Naive thymus-derived CD4-positive, alpha-beta T cell (primary cell): ENCODE measurements at regions of chr14 and their contacts with region 1.

Region 1: GRCh38 chr14:106185837-106186233 is 659.5 kb downstream of the TMEM121 start:
- DNase-seq: peak; percentile 55 to 80 (median 74)
- ATAC-seq: peak; percentile 89
- H3K4me3 ChIP-seq: no peak overlapping the region
- H3K4me3 Mint-ChIP-seq: peak overlapping the region; percentile 54 to 81 (median 72)
- H3K27ac ChIP-seq: peak overlapping the region; percentile 46
- H3K27ac Mint-ChIP-seq: peak overlapping the region; percentile 59 to 96 (median 89)
- H3K4me1 ChIP-seq: peaks cover 21 to 27% of the 10 kb centered on the region in 2 donors
- H3K4me1 Mint-ChIP-seq: peaks cover 24 to 51% (median 45%) of the 10 kb centered on the region in 7 donors
- H3K27me3 ChIP-seq: no peaks in the 10 kb centered on the region
- H3K27me3 Mint-ChIP-seq: peaks cover 0 to 64% (median 0%) of the 10 kb centered on the region in 5 donors

Region 2: GRCh38 chr14:105622322-105622955 is 563.4 kb before region 1 on chr14:
- CTCF ChIA-PET with region 1: no interaction called
- POLR2A ChIA-PET with region 1: no interaction called
- intact Hi-C with region 1: no loop called
- DNase-seq: no peak
- ATAC-seq: no peak
- H3K4me3 ChIP-seq: no peak overlapping the region
- H3K4me3 Mint-ChIP-seq: no peak overlapping the region
- H3K27ac ChIP-seq: no peak overlapping the region
- H3K27ac Mint-ChIP-seq: no peak overlapping the region
- H3K4me1 ChIP-seq: no peaks in the 10 kb centered on the region
- H3K4me1 Mint-ChIP-seq: no peaks in the 10 kb centered on the region
- H3K27me3 ChIP-seq: no peaks in the 10 kb centered on the region
- H3K27me3 Mint-ChIP-seq: peaks cover 0 to 5% (median 0%) of the 10 kb centered on the region in 5 donors

Region 3: GRCh38 chr14:105760691-105761346 is 425.0 kb before region 1 on chr14:
- CTCF ChIA-PET with region 1: no interaction called
- POLR2A ChIA-PET with region 1: no interaction called
- intact Hi-C with region 1: no loop called
- DNase-seq: peak in 1 of 9 donors; percentile 5
- ATAC-seq: no peak
- H3K4me3 ChIP-seq: no peak overlapping the region
- H3K4me3 Mint-ChIP-seq: no peak overlapping the region
- H3K27ac ChIP-seq: no peak overlapping the region
- H3K27ac Mint-ChIP-seq: no peak overlapping the region
- H3K4me1 ChIP-seq: no peaks in the 10 kb centered on the region
- H3K4me1 Mint-ChIP-seq: no peaks in the 10 kb centered on the region
- H3K27me3 ChIP-seq: no peaks in the 10 kb centered on the region
- H3K27me3 Mint-ChIP-seq: peaks cover 0 to 11% (median 4%) of the 10 kb centered on the region in 5 donors

Region 4: DNA sequence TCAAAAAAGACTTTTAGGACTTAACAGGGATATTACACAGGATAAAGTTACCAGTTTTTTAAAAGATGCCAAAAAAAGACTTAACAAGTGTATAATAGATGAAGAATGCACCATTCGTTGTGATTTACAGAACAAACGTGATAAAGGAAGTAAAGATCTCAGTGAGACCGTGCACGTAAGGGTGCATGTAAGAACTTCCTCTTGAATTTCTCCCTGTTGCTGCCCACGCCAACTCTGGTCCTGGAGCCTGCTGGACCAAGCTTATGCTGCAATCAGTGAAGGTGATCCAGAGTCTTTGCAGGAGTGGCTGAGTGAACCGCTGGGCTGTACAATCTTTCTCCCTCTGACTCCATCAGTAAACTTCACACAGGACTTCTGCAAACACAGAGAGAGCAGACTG is 65.7 kb before region 1 on chr14:
- CTCF ChIA-PET with region 1: interaction called, 4 read pairs
- POLR2A ChIA-PET with region 1: interaction called, 3 read pairs
- intact Hi-C with region 1: loop called in 1 of 2 experiments (anchors 5 kb)
- DNase-seq: no peak
- ATAC-seq: no peak
- H3K4me3 ChIP-seq: no peak overlapping the region
- H3K4me3 Mint-ChIP-seq: peak overlapping the region in 9 of 10 donors; percentile 43 to 79 (median 71)
- H3K27ac ChIP-seq: peak overlapping the region; percentile 29
- H3K27ac Mint-ChIP-seq: peak overlapping the region in 7 of 9 donors; percentile 68 to 94 (median 76)
- H3K4me1 ChIP-seq: peaks cover 3 to 25% of the 10 kb centered on the region in 2 donors
- H3K4me1 Mint-ChIP-seq: peaks cover 12 to 53% (median 45%) of the 10 kb centered on the region in 7 donors
- H3K27me3 ChIP-seq: no peaks in the 10 kb centered on the region
- H3K27me3 Mint-ChIP-seq: peaks cover 0 to 70% (median 9%) of the 10 kb centered on the region in 5 donors

Region 5: GRCh38 chr14:106174206-106174605 is 11.6 kb before region 1 on chr14:
- CTCF ChIA-PET with region 1: interaction called, 4 read pairs
- POLR2A ChIA-PET with region 1: interaction called, 4 read pairs
- intact Hi-C with region 1: loop called (anchors 1 kb)
- DNase-seq: peak; percentile 31 to 86 (median 79)
- ATAC-seq: peak; percentile 83
- H3K4me3 ChIP-seq: peak overlapping the region; percentile 17
- H3K4me3 Mint-ChIP-seq: peak overlapping the region; percentile 48 to 81 (median 64)
- H3K27ac ChIP-seq: peak overlapping the region; percentile 65
- H3K27ac Mint-ChIP-seq: peak overlapping the region; percentile 74 to 99 (median 93)
- H3K4me1 ChIP-seq: peaks cover 37 to 40% of the 10 kb centered on the region in 2 donors
- H3K4me1 Mint-ChIP-seq: peaks cover 28 to 87% (median 84%) of the 10 kb centered on the region in 7 donors
- H3K27me3 ChIP-seq: no peaks in the 10 kb centered on the region
- H3K27me3 Mint-ChIP-seq: peaks cover 0 to 45% (median 0%) of the 10 kb centered on the region in 5 donors

Region 6: GRCh38 chr14:106200541-106201315 is 14.9 kb after region 1 on chr14:
- CTCF ChIA-PET with region 1: interaction called, 8 read pairs
- POLR2A ChIA-PET with region 1: interaction called, 3 read pairs
- intact Hi-C with region 1: loop called in 1 of 2 experiments (anchors 2 kb)
- DNase-seq: peak in 5 of 9 donors; percentile 25 to 55 (median 45)
- ATAC-seq: peak; percentile 65
- H3K4me3 ChIP-seq: peak overlapping the region; percentile 22
- H3K4me3 Mint-ChIP-seq: peak overlapping the region; percentile 53 to 88 (median 79)
- H3K27ac ChIP-seq: no peak overlapping the region
- H3K27ac Mint-ChIP-seq: peak overlapping the region in 6 of 9 donors; percentile 12 to 83 (median 46)
- H3K4me1 ChIP-seq: no peaks in the 10 kb centered on the region
- H3K4me1 Mint-ChIP-seq: peaks cover 10 to 25% (median 22%) of the 10 kb centered on the region in 7 donors
- H3K27me3 ChIP-seq: no peaks in the 10 kb centered on the region
- H3K27me3 Mint-ChIP-seq: peaks cover 0 to 65% (median 20%) of the 10 kb centered on the region in 5 donors